AG04450 (cell line): ENCODE measurements at regions of chr3 and their contacts with region 1.

Region 1: DNA sequence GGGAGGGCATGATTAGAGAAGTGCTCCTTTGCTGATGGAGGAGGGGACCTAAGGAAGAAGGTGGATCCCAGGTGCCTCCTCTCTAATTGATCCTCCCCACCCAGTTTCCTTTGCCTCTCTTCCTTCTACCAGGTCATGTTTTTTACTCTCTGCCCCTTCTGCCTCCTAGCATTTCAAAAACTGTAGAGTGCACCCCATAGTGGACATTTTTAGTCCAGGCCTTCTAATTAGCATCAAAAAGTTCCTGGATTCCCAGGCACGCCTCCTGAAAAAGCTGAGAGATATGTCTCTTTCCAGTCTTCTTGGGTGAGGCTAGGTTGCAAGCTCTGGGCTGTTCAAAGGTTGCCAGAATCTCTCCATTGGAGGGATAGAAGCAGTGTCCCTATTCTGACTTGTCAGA is 18.7 kb upstream of the ITGB5 start:
- DNase-seq: no peak
- H3K4me3 ChIP-seq: no peak overlapping the region
- H3K27ac ChIP-seq: no peak overlapping the region
- H3K27me3 ChIP-seq: peaks cover 23% of the 10 kb centered on the region
- CTCF ChIP-seq: no peak; the same call in 1 of the 2 replicates

Region 2: GRCh38 chr3:124688581-124689454 is 217.0 kb before region 1 on chr3:
- CTCF ChIA-PET with region 1: interaction called, 12 read pairs
- POLR2A ChIA-PET with region 1: no interaction called
- DNase-seq: peak; percentile 51
- H3K4me3 ChIP-seq: no peak overlapping the region
- H3K27ac ChIP-seq: no peak overlapping the region
- H3K27me3 ChIP-seq: peaks cover 7% of the 10 kb centered on the region
- CTCF ChIP-seq: peak; percentile 90

Region 3: GRCh38 chr3:124768812-124769211 is 137.0 kb before region 1 on chr3:
- CTCF ChIA-PET with region 1: interaction called, 177 read pairs
- POLR2A ChIA-PET with region 1: no interaction called
- DNase-seq: no peak
- H3K4me3 ChIP-seq: no peak overlapping the region
- H3K27ac ChIP-seq: no peak overlapping the region
- H3K27me3 ChIP-seq: no peaks in the 10 kb centered on the region
- CTCF ChIP-seq: no peak

Region 4: GRCh38 chr3:124786441-124787241 is 119.2 kb before region 1 on chr3:
- CTCF ChIA-PET with region 1: interaction called, 97 read pairs
- POLR2A ChIA-PET with region 1: interaction called, 3 read pairs
- DNase-seq: no peak
- H3K4me3 ChIP-seq: no peak overlapping the region
- H3K27ac ChIP-seq: no peak overlapping the region
- H3K27me3 ChIP-seq: no peaks in the 10 kb centered on the region
- CTCF ChIP-seq: peak; percentile 52

Region 5: DNA sequence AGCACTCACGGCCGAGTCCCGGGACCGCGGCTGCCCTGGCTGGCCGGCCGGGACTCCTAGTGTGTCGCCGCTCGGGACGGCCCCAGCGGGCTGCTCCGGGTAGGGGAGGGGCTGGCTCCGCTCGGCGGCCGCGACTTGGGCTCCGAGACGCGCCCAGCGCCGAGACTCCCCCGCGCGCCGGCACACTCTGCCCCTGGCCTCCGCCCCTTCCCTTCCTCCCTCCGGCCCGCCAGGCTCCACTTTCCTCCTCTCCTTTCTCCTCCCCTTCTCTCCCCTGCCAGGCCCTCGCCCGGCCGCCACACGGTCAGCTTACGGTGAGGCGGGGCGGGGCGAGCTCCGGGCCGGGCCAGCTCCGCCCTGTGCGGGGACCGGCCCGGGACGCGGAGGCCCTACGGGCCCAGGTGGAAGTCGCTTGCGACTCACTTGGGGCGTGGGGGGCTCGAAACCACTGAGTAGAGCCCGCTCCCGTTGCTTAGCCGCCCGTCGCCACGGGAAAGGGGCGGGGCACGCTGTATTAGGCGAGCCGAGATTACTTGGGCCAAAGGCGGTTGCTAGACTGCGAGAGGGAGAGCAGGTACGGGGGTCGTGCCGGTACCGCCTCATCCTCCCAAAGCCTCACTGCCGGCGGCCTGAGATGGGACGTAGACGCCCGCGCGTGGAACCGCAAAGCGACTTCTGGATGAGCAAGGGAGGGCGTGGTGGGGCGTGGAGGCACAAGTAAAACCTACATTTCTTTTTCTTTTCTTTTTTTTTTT is 18.5 kb before region 1 on chr3 and contains the start of gene ITGB5:
- CTCF ChIA-PET with region 1: interaction called, 32 read pairs
- POLR2A ChIA-PET with region 1: no interaction called
- DNase-seq: peak; percentile 26
- H3K4me3 ChIP-seq: peak within 1 kb of the TSS; percentile 70
- H3K27ac ChIP-seq: peak within 1 kb of the TSS; percentile 21
- H3K27me3 ChIP-seq: no peaks in the 10 kb centered on the region
- CTCF ChIP-seq: no peak
- polyA plus RNA-seq, gene ITGB5: 127 and 207 TPM in 2 replicates

Region 6: GRCh38 chr3:125051715-125052581 is 146.1 kb after region 1 on chr3:
- CTCF ChIA-PET with region 1: no interaction called
- POLR2A ChIA-PET with region 1: no interaction called
- DNase-seq: no peak
- H3K4me3 ChIP-seq: peak overlapping the region; percentile 71
- H3K27ac ChIP-seq: peak overlapping the region; percentile 83
- H3K27me3 ChIP-seq: no peaks in the 10 kb centered on the region
- CTCF ChIP-seq: no peak

Region 7: GRCh38 chr3:125585595-125586223 is 679.9 kb after region 1 on chr3:
- CTCF ChIA-PET with region 1: interaction called, 13 read pairs
- POLR2A ChIA-PET with region 1: no interaction called
- DNase-seq: peak; percentile 66
- H3K4me3 ChIP-seq: no peak overlapping the region
- H3K27ac ChIP-seq: no peak overlapping the region
- H3K27me3 ChIP-seq: no peaks in the 10 kb centered on the region
- CTCF ChIP-seq: peak; percentile 94